GM18951 (cell line): ENCODE measurements at regions of chr1 and their contacts with region 1.

Region 1: DNA sequence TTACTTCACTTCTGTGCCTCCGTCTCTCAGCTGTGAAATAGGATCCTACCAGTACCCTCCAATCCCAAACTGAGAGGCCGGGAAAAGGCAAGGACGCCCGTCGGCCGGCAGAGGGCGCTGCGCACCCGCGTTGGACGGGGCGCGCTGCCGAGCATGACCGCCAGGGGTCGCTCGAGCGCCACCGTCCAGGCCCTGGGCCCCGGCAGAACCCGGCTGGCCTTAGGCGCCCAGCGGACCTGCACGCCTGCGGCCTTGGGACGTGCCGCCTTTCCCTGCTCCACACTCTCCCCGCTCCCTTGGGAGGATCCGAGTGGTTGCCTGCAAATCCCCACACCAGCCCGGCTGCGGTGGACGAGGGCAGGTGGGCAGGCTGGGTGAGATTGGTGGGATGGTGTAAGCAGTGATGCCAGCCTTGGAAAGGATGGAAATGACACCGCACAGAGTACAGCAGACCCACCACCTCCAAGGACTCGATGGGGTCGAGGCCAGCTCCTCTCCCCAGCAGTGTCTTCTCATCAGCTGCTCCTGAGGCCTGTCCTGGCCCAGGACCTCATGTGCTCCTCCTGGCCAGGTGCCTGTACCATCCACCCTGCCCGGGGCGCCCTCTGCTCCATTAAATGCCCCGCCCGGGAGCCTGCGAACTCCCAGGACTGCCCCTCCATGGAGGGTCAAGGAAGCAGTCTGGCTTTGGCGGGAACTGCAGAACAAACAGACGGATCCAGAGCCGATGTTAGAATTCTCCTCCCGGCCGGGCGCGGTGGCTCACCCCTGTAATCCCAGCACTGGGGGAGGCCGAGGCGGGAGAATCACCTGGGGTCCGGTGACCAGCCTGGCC is 47.4 kb upstream of the LBR start:
- POLR2A ChIP-seq: no peak

Region 2: DNA sequence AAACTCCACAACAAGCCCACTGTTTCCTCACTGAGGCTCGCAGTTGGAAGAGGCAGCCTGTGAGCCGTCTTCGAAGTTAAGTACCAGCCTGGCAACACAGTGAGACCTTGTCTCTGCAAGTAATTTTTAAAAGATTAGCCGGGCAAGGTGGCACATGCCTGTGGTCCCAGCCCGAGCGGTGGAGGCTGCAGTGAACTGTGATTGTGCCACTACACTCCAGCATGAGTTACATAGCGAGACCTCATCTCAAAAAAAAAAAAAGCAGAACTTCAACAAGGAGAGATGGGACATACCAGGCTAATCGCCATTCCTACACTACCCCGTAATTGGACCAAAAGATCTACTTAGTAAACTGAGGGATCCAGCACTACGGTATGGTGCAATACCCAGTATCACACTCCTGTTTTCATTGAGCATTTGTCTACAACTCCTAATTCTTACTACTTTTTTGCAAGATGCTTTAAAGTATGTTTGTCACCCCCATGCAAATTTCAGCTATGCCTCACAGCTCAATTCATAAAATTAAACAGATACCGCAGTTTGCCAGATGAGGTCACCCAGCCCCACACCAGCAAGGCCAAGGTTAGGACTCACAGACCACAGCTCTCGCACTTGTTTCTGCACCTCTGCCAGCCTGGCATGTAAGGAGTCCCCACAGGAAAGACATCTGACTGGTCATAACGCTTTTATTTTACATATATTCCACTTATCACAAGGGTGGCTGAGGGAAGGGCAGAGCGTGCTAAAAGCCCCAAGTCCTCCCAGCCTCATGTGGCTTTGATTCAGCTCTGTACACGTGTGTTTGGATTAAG is 502.9 kb after region 1 on chr1:
- in situ Hi-C with region 1: loop called (anchors 10 kb)
- POLR2A ChIP-seq: no peak